IMR-90 (cell line): ENCODE measurements at regions of chr19 and their contacts with region 1.

Region 1: DNA sequence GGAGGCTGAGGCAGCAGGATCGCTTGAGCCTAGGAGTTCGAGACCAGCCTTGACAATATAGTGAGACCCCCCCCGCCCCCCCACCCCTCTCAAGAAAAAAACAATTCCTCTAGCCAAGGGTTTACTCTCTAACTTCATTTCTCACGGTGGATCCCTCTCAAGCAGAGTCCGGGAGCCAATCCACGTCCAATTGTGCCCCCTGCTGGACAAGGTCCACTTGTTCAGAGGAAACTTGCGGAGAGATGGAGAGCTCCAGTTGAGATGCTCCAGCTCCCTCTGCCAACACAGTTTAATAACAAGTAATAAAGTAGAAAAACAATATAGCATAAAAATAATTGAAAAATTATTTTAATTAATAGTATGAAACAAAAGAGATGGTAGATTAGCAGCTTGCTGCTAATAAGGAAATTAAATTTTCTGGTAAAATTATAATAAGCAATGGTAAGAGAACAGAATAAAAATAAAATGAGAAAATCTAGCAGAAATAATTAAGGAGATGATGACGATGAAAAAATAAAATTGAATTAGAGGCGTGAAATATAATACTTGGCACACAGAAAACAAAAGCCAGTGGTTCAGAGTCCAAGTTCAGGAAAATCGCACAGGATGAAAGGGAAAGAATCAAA is 14.5 kb upstream of the SIGLEC14 start:
- DNase-seq: peak; percentile 72
- ATAC-seq: peak; percentile 89
- H3K4me3 ChIP-seq: no peak overlapping the region
- H3K27ac ChIP-seq: no peak overlapping the region
- H3K4me1 ChIP-seq: no peaks in the 10 kb centered on the region
- H3K27me3 ChIP-seq: no peaks in the 10 kb centered on the region
- CTCF ChIP-seq: peak; percentile 61
- POLR2A ChIP-seq: no peak
- RAD21 ChIP-seq: peak; percentile 67

Region 2: DNA sequence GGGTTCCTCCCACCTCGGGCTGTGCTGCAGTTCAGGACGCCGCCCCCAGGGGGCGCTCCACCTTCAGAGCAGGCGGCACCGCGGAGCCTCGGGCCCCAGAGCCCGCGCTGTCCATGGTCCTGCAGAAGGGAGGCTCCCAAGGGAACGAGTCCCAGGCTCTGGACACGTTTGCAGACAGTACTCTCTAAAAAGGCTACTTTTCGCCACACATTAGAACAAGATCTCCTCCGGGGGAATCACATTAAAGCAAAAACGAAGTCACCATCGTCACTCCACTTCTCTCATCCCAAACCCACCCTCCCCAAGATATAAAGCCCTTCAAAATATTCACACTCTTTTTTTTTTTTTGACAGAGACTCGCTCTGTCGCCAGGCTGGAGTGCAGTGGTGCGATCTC is 239.0 kb before region 1 on chr19:
- CTCF ChIA-PET with region 1: interaction called, 4 read pairs
- POLR2A ChIA-PET with region 1: no interaction called
- dilution Hi-C with region 1: no loop called
- in situ Hi-C with region 1: no loop called
- intact Hi-C with region 1: loop called (anchors 2 kb)
- DNase-seq: peak; percentile 59
- ATAC-seq: peak; percentile 100
- H3K4me3 ChIP-seq: no peak overlapping the region
- H3K27ac ChIP-seq: no peak overlapping the region
- H3K4me1 ChIP-seq: no peaks in the 10 kb centered on the region
- H3K27me3 ChIP-seq: no peaks in the 10 kb centered on the region
- CTCF ChIP-seq: peak; percentile 94
- POLR2A ChIP-seq: no peak
- RAD21 ChIP-seq: peak; percentile 76

Region 3: GRCh38 chr19:51473009-51473707 is 187.9 kb before region 1 on chr19:
- CTCF ChIA-PET with region 1: interaction called, 27 read pairs
- POLR2A ChIA-PET with region 1: no interaction called
- dilution Hi-C with region 1: no loop called
- in situ Hi-C with region 1: loop called (anchors 5 kb)
- intact Hi-C with region 1: loop called (anchors 1 kb)
- DNase-seq: peak; percentile 59
- ATAC-seq: peak; percentile 88
- H3K4me3 ChIP-seq: no peak overlapping the region
- H3K27ac ChIP-seq: no peak overlapping the region
- H3K4me1 ChIP-seq: no peaks in the 10 kb centered on the region
- H3K27me3 ChIP-seq: no peaks in the 10 kb centered on the region
- CTCF ChIP-seq: peak; percentile 69
- POLR2A ChIP-seq: no peak
- RAD21 ChIP-seq: peak; percentile 75

Region 4: DNA sequence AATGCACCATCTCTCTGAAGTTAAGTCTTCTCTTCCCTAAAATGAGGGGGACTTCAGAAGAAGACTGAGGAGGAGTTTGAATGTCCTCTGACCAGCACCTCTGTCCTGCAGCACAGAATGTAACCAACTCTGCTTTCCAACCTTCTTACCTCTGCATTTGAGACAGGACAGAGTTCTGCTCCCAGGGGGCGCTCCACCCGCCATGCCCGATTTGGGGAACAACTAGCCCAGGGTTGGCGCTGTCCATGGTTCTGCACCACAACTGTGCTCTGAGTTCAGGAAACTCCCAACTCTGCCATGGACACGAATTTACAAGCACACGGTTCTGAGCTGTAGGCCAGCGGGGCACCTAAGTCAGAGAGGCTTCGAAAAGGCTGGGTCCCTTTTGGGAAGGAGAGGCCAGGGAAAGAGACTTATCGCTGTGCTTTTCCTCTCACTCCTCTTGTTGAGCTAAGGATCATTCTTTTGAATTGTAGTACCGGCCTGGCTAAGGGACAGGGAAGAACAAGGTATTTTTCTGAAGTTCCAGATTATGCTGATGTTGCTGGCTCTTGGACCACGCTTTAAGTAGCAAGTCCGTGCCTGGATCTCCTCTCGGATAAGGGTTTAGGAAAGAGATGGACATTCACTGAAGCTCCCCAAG is 53.0 kb before region 1 on chr19:
- CTCF ChIA-PET with region 1: interaction called, 4 read pairs
- POLR2A ChIA-PET with region 1: no interaction called
- dilution Hi-C with region 1: no loop called
- in situ Hi-C with region 1: no loop called
- intact Hi-C with region 1: loop called (anchors 1 kb)
- DNase-seq: peak; percentile 70
- ATAC-seq: peak; percentile 94
- H3K4me3 ChIP-seq: no peak overlapping the region
- H3K27ac ChIP-seq: no peak overlapping the region
- H3K4me1 ChIP-seq: no peaks in the 10 kb centered on the region
- H3K27me3 ChIP-seq: no peaks in the 10 kb centered on the region
- CTCF ChIP-seq: peak; percentile 76
- POLR2A ChIP-seq: no peak
- RAD21 ChIP-seq: peak; percentile 47

Region 5: GRCh38 chr19:51712460-51713083 is 51.5 kb after region 1 on chr19:
- CTCF ChIA-PET with region 1: no interaction called
- POLR2A ChIA-PET with region 1: no interaction called
- dilution Hi-C with region 1: no loop called
- in situ Hi-C with region 1: no loop called
- intact Hi-C with region 1: no loop called
- DNase-seq: peak; percentile 35
- ATAC-seq: peak; percentile 28; the same call in 1 of the 2 replicates
- H3K4me3 ChIP-seq: no peak overlapping the region
- H3K27ac ChIP-seq: no peak overlapping the region
- H3K4me1 ChIP-seq: no peaks in the 10 kb centered on the region
- H3K27me3 ChIP-seq: peaks cover 6% of the 10 kb centered on the region
- CTCF ChIP-seq: peak; percentile 30; the same call in 1 of the 2 replicates
- POLR2A ChIP-seq: no peak
- RAD21 ChIP-seq: peak; percentile 13; the same call in 1 of the 2 replicates

Region 6: DNA sequence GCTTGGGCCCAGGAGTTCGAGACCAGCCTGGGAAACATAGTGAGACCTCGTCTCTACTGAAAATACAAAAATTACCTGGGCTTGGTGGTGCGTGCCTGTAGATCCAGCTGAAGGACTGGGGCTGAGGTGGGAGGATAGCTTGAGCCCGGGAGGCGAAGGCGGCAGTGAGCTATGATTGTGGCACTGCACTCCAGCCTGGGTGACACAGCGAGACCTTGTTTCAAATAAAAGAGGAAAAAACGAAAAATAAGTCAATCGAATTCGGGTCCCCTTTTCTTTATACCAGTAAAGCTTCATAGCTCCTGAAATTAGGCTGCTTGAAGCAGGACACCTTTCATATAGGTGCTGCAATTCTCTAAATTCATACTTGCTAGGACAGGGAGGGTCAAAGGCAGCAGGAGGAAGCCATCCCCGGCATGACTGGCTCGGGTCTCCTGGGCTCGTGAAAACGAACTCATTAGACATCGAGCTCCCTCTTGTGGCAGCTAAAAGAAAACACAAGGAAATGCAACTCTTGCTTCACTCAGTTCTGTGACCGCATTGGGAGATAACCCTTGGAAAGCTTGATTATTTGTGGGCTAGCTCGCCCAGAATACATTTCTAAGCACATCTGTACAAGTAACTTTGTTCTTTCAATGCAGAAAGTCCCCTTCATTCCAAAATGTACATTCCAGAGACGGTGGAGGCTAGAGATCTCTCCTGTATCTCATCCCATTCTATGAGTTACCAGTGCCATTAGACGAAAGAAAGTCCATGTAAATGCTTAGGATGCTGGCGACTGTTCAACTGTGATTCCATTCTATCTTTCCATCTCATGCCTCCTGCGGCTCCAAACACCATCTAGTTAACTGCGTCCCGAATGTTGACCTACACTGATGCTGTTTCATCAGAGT is 116.7 kb after region 1 on chr19:
- CTCF ChIA-PET with region 1: interaction called, 5 read pairs
- POLR2A ChIA-PET with region 1: no interaction called
- dilution Hi-C with region 1: no loop called
- in situ Hi-C with region 1: loop called (anchors 10 kb)
- intact Hi-C with region 1: loop called (anchors 2 kb)
- DNase-seq: peak; percentile 80
- ATAC-seq: peak; percentile 99
- H3K4me3 ChIP-seq: no peak overlapping the region
- H3K27ac ChIP-seq: no peak overlapping the region
- H3K4me1 ChIP-seq: no peaks in the 10 kb centered on the region
- H3K27me3 ChIP-seq: peaks cover 2% of the 10 kb centered on the region; the same call in 1 of the 2 replicates
- CTCF ChIP-seq: peak; percentile 82
- POLR2A ChIP-seq: no peak
- RAD21 ChIP-seq: peak; percentile 79